Naive thymus-derived CD4-positive, alpha-beta T cell (primary cell): ENCODE measurements at regions of chr2 and their contacts with region 1.

Region 1: DNA sequence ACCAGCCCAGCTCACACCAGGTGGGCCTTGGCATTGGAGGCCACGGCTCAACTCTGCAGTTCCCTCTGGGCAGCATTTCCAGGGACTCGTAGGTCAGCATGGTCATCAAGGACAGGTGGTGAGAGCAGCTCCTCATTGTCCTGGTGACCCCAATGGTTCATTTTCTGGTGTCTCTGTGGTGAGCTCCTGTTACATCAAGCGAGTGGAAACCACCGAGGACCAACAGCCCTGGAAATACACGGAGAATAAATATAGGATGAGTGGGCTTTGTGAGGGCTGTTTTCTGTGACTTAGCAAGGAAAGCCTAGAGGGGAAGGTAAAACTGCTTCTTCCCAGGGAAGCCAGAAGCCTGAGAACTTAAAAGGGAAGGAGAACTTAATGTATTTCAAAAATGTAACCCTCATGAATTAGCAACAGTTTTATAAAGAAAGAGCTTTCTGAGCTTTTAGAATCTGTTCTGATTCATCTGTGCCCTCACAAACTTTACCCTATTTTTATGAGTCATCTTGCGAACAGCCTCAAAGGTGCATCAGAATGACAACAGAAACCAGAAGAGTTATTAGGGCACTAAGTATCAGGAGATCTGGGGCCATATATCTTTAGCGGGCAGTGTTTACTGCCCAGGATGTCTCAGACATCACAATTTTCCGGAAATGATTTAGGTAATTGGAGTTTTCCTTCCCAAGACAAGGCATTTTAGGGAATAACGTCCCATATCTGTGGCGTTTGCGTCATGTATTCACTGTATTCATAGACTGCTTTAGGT is 18.7 kb downstream of the C2orf92 start:
- DNase-seq: peak in 1 of 9 donors; percentile 17
- ATAC-seq: no peak
- H3K4me3 ChIP-seq: no peak overlapping the region
- H3K4me3 Mint-ChIP-seq: no peak overlapping the region
- H3K27ac ChIP-seq: no peak overlapping the region
- H3K27ac Mint-ChIP-seq: peak overlapping the region in 1 of 9 donors; percentile 55
- H3K4me1 ChIP-seq: no peaks in the 10 kb centered on the region
- H3K4me1 Mint-ChIP-seq: peaks cover 0 to 16% (median 0%) of the 10 kb centered on the region in 7 donors
- H3K27me3 ChIP-seq: no peaks in the 10 kb centered on the region
- H3K27me3 Mint-ChIP-seq: peaks cover 0 to 2% (median 0%) of the 10 kb centered on the region in 5 donors

Region 2: DNA sequence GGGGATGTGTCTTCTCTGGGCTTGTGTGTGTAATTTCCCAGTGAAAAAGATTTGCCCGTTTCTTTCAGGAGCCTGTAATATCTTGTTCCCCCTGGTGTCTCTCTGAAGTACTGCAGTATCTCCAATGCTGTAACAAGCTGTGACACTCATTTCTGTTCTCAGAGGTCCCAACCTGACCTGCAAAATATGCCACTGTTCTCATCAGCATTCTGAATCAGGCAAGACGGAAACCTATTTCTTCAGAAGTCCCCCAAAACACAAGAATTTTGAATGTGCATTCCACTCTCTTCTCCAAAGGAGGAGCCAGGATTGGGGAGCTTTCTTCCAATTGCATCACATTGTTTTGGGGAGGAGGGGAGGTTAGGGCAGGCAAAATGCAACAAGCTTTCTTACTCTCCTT is 581.0 kb after region 1 on chr2:
- CTCF ChIA-PET with region 1: no interaction called
- POLR2A ChIA-PET with region 1: no interaction called
- intact Hi-C with region 1: loop called in 1 of 2 experiments (anchors 10 kb)
- DNase-seq: peak in 1 of 9 donors; percentile 5
- ATAC-seq: peak; percentile 55
- H3K4me3 ChIP-seq: no peak overlapping the region
- H3K4me3 Mint-ChIP-seq: no peak overlapping the region
- H3K27ac ChIP-seq: no peak overlapping the region
- H3K27ac Mint-ChIP-seq: no peak overlapping the region
- H3K4me1 ChIP-seq: no peaks in the 10 kb centered on the region
- H3K4me1 Mint-ChIP-seq: no peaks in the 10 kb centered on the region
- H3K27me3 ChIP-seq: no peaks in the 10 kb centered on the region
- H3K27me3 Mint-ChIP-seq: peaks cover 0 to 46% (median 4%) of the 10 kb centered on the region in 5 donors